ENCODE measurements at regions of chr5 and their contacts with region 1.

Region 1: GRCh38 chr5:149834246-149834855 is 104.2 kb downstream of the PPARGC1B start:
- DNase-seq: peak; percentile 79
- H3K4me3 Mint-ChIP-seq: no peak overlapping the region
- H3K27ac Mint-ChIP-seq: no peak overlapping the region
- H3K4me1 Mint-ChIP-seq: no peaks in the 10 kb centered on the region
- H3K27me3 Mint-ChIP-seq: no peaks in the 10 kb centered on the region
- CTCF ChIP-seq: peak; percentile 73

Region 2: DNA sequence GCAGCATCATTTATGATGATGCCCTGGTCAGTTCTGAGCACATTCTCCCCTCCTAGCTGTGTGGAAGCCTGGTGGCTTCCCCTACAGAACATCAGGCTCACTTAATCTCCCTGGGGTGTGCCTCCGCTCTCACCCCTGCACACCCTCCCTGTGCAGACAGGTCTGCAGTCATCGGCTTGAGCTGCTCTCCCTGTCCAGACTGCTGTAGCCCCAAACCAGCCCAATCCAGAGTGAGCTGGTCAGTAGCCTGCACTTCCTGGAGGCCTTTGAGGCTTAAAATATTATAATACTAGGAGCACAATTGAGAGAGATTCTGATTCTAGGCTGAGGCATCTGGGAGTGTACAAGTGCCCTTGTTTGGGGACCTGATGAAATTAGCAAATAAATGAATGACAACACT is 44.1 kb before region 1 on chr5:
- CTCF ChIA-PET with region 1: no interaction called
- intact Hi-C with region 1: no loop called
- DNase-seq: no peak
- H3K4me3 Mint-ChIP-seq: no peak overlapping the region
- H3K27ac Mint-ChIP-seq: no peak overlapping the region
- H3K4me1 Mint-ChIP-seq: peaks cover 10% of the 10 kb centered on the region
- H3K27me3 Mint-ChIP-seq: no peaks in the 10 kb centered on the region
- CTCF ChIP-seq: no peak

Region 3: DNA sequence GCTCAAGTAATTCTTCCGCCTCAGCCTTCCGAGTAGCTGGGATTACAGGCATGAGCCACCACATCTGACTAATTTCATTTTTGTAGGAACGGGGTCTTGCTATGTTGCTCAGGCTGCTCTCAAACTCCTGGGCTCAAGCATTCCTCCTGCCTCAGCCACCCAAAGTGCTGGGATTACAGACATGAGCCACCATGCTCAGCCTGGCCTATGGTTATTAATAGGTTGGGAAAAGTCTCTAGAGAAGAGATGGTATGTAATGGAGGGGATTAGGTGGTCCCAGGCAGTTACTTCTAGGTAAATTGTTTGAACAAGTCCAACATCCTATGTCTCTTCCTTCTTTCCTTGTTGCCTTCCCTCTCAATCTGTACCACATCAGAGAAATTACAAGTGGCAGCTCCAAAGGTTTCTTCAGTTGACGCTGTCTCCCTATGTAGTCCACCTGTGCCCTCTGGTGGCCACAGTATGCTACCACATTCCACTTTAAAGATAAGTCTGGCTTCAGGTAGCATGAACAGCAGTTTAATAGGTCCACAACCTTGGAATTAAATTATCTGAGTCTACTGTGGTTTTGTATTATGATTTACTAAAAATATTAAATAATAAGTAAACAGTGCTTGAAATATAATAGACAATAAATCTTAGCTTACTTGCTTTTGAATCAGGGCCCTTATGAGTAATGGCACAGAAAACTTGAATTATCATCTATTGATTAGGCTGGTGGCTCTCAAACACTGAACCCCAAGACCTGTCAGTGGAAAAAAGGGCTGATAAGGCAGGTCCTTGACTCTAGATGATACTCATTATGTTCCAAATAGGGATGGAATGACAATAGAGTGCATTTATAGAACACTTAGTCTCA is 156.4 kb after region 1 on chr5:
- CTCF ChIA-PET with region 1: interaction called, 39 read pairs
- intact Hi-C with region 1: loop called (anchors 1 kb)
- DNase-seq: peak; percentile 80
- H3K4me3 Mint-ChIP-seq: no peak overlapping the region
- H3K27ac Mint-ChIP-seq: peak overlapping the region; percentile 27
- H3K4me1 Mint-ChIP-seq: peaks cover 13% of the 10 kb centered on the region
- H3K27me3 Mint-ChIP-seq: no peaks in the 10 kb centered on the region
- CTCF ChIP-seq: peak; percentile 89